ENCODE measurements at regions of chr17 and their contacts with region 1.

Region 1: DNA sequence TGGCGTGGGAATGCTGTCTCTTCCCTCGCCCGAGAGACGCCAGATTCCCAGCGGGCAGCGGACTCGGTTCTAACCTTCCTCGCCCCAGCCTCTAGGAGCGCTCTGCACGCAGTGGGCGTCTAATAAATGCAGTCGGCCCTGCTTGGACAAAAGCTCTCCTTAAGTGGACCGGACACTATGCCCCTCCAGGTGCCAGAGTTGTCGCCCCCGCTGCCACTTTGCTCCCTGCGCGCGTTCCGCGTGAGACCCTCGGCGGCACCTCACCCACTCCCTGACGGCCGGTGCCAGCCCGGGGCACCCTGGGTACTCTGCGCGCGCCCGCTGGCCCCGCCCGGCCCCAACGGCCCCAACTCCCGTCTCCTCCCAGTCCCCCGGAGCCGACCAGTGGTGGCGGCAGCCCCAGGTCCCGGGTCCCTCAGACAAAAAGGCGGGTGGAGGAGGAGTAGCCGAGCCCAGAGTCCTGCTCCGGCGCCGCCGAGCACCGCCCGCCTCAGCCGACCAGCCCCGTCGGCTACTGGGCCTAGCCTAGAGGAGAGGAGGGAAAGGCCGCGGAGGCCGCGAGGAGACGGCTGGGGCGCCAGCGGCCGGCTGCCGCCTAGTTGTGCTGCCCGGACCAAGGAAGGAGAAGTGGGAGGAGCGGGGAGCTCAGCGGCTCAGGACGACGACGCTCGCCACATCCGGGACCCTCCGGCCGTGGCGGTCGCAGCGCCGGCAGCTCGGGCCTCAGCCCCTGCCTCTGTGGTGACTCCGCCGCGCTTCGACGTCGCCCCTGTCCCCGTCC is 123.0 kb downstream of the GOSR1 start:
- DNase-seq: peak; percentile 91 to 94
- ATAC-seq: peak; percentile 99
- H3K4me3 ChIP-seq: peak overlapping the region; percentile 67 to 93
- H3K27ac ChIP-seq: peak overlapping the region; percentile 24 to 91
- H3K4me1 ChIP-seq: no peaks in the 10 kb centered on the region
- H3K27me3 ChIP-seq: no peaks in the 10 kb centered on the region

Region 2: DNA sequence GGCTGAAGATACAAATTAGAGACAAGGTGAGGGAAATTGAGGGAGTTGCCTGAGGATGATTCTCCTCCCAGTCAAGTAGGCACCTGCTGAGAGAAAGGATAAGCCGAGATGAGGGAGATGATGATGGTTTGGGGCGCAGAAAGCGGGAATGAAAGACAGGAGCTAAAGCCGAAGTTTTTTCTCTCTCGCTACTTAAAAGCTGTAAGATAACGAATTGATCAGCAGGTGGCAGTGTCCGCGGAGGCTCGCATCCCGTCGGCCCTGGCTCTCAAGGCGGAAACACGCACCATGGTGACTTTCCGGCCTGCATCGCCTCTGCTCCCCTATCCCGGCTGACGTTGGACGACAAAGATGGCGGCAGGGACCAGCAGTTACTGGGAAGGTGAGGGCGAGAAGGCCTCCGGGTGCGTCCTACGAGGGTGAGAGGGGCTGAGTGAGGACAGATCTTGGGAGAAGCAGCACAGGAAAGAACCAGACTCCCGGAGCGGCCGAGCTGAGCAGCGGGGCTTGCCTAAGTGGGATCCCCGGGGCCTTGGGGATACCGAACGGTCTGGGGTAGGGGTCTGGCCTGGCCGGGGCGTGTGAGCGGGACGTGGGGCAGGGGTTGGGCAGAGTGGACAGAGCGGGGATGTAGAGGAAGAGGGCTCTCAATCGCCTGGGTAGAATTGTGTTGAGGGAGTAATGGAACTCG is 123.0 kb before region 1 on chr17 and contains the start of gene GOSR1:
- intact Hi-C with region 1: loop called in 1 of 2 experiments (anchors 5 kb)
- DNase-seq: peak; percentile 96
- ATAC-seq: peak; percentile 99
- H3K4me3 ChIP-seq: peak within 1 kb of the TSS; percentile 83 to 95
- H3K27ac ChIP-seq: peak within 1 kb of the TSS; percentile 71 to 93
- H3K4me1 ChIP-seq: no peaks in the 10 kb centered on the region
- H3K27me3 ChIP-seq: no peaks in the 10 kb centered on the region
- total RNA-seq, gene GOSR1: 53.8 to 55.7 TPM

Region 3: DNA sequence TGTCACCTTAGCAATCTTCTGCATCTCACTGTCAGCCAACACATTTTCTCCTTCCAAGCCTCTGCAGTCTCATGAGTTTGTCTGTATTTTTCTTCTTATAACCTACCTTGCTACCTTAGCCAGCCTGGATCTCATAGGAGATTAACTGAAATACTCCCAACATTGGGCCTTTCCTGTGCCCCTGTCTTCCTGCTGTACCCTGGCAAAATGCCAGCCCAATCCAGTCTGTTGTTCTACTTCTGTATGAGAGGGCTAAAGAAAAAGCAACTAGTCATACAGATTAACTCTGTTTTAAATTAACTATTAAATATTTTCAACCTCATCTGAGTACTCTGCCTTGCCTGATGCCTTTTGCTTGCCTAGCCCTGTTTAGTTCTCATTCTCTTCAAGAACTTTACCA is 104.7 kb before region 1 on chr17:
- intact Hi-C with region 1: no loop called
- DNase-seq: no peak
- ATAC-seq: no peak
- H3K4me3 ChIP-seq: no peak overlapping the region
- H3K27ac ChIP-seq: no peak overlapping the region
- H3K4me1 ChIP-seq: no peaks in the 10 kb centered on the region
- H3K27me3 ChIP-seq: no peaks in the 10 kb centered on the region

Region 4: DNA sequence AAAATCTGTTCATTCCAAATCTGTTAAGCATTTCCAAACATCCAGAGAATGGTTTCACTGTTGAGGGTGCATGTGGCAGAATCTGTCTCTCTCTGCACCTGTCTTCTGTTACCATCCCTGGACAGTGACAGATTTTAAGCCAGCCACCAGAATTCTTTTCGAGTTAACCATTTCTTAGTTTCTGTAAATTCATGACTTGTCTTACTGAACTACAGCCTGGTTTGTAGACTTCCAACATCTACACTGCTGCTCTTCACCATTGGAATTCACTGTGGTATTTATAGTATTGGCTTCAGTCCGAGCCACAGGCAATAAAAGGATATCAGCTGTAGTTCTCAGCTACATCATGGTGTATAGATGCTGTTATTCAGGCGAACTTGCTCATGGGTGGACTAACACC is 75.4 kb before region 1 on chr17:
- intact Hi-C with region 1: loop called in 1 of 2 experiments (anchors 5 kb)
- DNase-seq: no peak
- ATAC-seq: no peak
- H3K4me3 ChIP-seq: no peak overlapping the region
- H3K27ac ChIP-seq: peak overlapping the region in 1 of 2 donors; percentile 10
- H3K4me1 ChIP-seq: peaks cover 0 to 4% of the 10 kb centered on the region in 2 donors
- H3K27me3 ChIP-seq: no peaks in the 10 kb centered on the region